ENCODE measurements at regions of chr2 and their contacts with region 1.

Region 1: DNA sequence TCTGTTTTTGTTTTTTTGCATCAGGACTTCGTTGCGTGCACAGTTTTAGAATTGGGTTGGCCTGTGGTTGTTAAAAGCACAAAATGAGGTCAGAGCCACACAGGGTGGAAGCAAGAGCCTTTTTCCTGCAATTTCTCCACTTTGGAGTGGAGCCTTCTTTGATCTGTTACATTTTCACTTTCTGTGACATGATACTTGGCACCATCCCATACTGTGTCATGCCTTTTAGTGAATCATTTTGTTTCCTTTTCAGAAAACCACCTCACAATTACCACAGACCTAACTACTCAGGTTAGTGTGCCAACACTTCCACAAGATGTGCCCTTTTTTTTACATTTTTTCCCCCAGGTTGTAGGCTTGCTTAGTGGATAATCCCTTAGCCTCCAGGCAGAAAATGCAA is 32.5 kb downstream of the MERTK start:
- DNase-seq: peak; percentile 46
- H3K4me3 Mint-ChIP-seq: no peak overlapping the region
- H3K27ac Mint-ChIP-seq: peak overlapping the region; percentile 66
- H3K4me1 Mint-ChIP-seq: peaks cover 15% of the 10 kb centered on the region
- H3K27me3 Mint-ChIP-seq: peaks cover 10% of the 10 kb centered on the region

Region 2: DNA sequence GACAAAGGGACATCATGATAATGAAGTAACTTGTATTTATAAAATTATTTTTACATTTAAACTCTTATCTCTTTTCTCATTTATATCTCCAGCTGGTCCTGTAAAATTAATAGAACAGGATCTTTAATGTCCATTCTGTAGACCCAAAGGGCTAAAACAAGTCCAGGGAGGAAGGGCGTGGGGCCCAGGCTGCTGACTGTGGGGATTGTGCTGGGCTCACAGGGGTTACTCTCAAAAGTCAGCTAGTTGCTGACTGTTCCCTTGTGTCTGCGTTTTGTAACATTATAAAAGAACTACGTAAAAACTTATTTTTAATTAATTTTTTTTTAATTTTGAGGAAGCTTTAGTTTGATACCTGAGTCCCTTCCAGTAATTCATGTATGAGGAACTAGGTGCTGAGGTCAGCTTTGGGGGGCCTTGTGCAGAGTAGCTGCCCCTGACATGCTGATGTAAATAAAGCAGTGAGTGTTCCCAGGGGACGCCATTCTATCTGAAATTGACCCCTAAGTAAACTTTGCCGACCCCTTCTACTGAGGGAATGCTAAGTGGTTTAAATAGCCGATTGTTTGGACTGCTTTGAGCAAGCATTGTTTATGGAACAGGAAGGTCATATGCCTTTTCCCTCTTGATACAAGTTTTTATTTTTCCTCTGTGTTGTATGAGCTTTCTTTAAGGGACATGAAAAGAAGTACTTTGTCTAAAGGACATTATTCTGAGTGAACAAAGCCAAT is 23.9 kb after region 1 on chr2:
- CTCF ChIA-PET with region 1: no interaction called
- POLR2A ChIA-PET with region 1: no interaction called
- intact Hi-C with region 1: loop called (anchors 1 kb)
- DNase-seq: no peak
- H3K4me3 Mint-ChIP-seq: no peak overlapping the region
- H3K27ac Mint-ChIP-seq: no peak overlapping the region
- H3K4me1 Mint-ChIP-seq: peaks cover 19% of the 10 kb centered on the region
- H3K27me3 Mint-ChIP-seq: peaks cover 19% of the 10 kb centered on the region

Region 3: GRCh38 chr2:111986116-111986900 is 55.4 kb after region 1 on chr2:
- CTCF ChIA-PET with region 1: no interaction called
- POLR2A ChIA-PET with region 1: no interaction called
- intact Hi-C with region 1: loop called (anchors 5 kb)
- DNase-seq: no peak
- H3K4me3 Mint-ChIP-seq: no peak overlapping the region
- H3K27ac Mint-ChIP-seq: no peak overlapping the region
- H3K4me1 Mint-ChIP-seq: peaks cover 25% of the 10 kb centered on the region
- H3K27me3 Mint-ChIP-seq: peaks cover 3% of the 10 kb centered on the region

Region 4: GRCh38 chr2:112259509-112260294 is 328.8 kb after region 1 on chr2:
- CTCF ChIA-PET with region 1: no interaction called
- POLR2A ChIA-PET with region 1: no interaction called
- intact Hi-C with region 1: no loop called
- DNase-seq: peak; percentile 90
- H3K4me3 Mint-ChIP-seq: peak overlapping the region; percentile 54
- H3K27ac Mint-ChIP-seq: no peak overlapping the region
- H3K4me1 Mint-ChIP-seq: peaks cover 13% of the 10 kb centered on the region
- H3K27me3 Mint-ChIP-seq: no peaks in the 10 kb centered on the region